ENCODE measurements at regions of chr18 and their contacts with region 1.

Region 1: DNA sequence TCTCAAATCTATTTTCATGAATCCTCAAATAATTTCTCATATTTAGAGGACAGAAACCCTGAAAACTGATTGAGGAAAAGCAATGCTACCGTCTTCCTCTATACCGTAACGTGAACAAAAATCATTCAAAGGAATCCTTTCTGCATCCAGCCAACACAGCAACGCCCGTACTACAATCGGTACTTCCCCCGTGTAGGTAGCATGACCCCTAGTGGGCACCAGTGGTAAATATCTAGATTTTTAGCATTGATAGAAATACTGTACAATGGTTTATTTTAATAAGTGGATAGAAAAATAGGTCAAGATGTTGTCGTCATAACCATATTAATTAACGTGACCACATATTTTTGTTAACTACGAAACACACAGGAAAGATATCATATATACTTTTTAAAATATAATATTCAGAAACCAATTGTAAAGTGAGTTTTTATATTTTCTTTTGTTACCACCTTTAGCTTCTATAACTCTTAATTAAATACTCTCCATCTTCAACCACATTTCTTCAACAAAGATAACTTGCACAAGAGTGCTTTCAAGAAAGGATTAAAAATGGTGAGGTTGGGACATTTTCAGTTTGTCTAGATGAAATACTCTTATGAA is 194.1 kb downstream of the SS18 start:
- DNase-seq: peak; percentile 32
- ATAC-seq: peak; percentile 90
- H3K4me3 ChIP-seq: no peak overlapping the region
- H3K27ac ChIP-seq: no peak overlapping the region
- H3K4me1 ChIP-seq: no peaks in the 10 kb centered on the region
- H3K27me3 ChIP-seq: peaks cover 12% of the 10 kb centered on the region; the same call in 1 of the 2 replicates
- CTCF ChIP-seq: peak; percentile 42 to 85 (median 74); a peak in 5 of 6 replicates
- POLR2A ChIP-seq: no peak
- RAD21 ChIP-seq: peak; percentile 68

Region 2: GRCh38 chr18:24543805-24544498 is 1352.3 kb before region 1 on chr18:
- CTCF ChIA-PET with region 1: no interaction called
- POLR2A ChIA-PET with region 1: no interaction called
- RAD21 ChIA-PET with region 1: no interaction called
- intact Hi-C with region 1: loop called (anchors 1 kb)
- DNase-seq: peak; percentile 22
- ATAC-seq: peak; percentile 73
- H3K4me3 ChIP-seq: no peak overlapping the region
- H3K27ac ChIP-seq: no peak overlapping the region
- H3K4me1 ChIP-seq: no peaks in the 10 kb centered on the region
- H3K27me3 ChIP-seq: no peaks in the 10 kb centered on the region
- CTCF ChIP-seq: peak; percentile 43 to 75 (median 47); a peak in 5 of 6 replicates
- POLR2A ChIP-seq: no peak
- RAD21 ChIP-seq: peak; percentile 66

Region 3: GRCh38 chr18:24600076-24600654 is 1296.1 kb before region 1 on chr18:
- CTCF ChIA-PET with region 1: no interaction called
- POLR2A ChIA-PET with region 1: no interaction called
- RAD21 ChIA-PET with region 1: no interaction called
- intact Hi-C with region 1: loop called (anchors 2 kb)
- DNase-seq: peak; percentile 27
- ATAC-seq: peak; percentile 65
- H3K4me3 ChIP-seq: no peak overlapping the region
- H3K27ac ChIP-seq: no peak overlapping the region
- H3K4me1 ChIP-seq: no peaks in the 10 kb centered on the region
- H3K27me3 ChIP-seq: peaks cover 37% of the 10 kb centered on the region
- CTCF ChIP-seq: peak; percentile 50 to 74 (median 54); a peak in 5 of 6 replicates
- POLR2A ChIP-seq: no peak
- RAD21 ChIP-seq: peak; percentile 65

Region 4: GRCh38 chr18:25561918-25562317 is 334.4 kb before region 1 on chr18:
- CTCF ChIA-PET with region 1: no interaction called
- POLR2A ChIA-PET with region 1: no interaction called
- RAD21 ChIA-PET with region 1: no interaction called
- intact Hi-C with region 1: loop called (anchors 1 kb)
- DNase-seq: no peak
- ATAC-seq: no peak
- H3K4me3 ChIP-seq: no peak overlapping the region
- H3K27ac ChIP-seq: no peak overlapping the region
- H3K4me1 ChIP-seq: no peaks in the 10 kb centered on the region
- H3K27me3 ChIP-seq: no peaks in the 10 kb centered on the region
- CTCF ChIP-seq: peak in 2 of 3 experiments; percentile 24 to 35; a peak in 3 of 6 replicates
- POLR2A ChIP-seq: no peak
- RAD21 ChIP-seq: no peak

Region 5: GRCh38 chr18:25832001-25832604 is 64.2 kb before region 1 on chr18:
- CTCF ChIA-PET with region 1: no interaction called
- POLR2A ChIA-PET with region 1: no interaction called
- RAD21 ChIA-PET with region 1: no interaction called
- intact Hi-C with region 1: loop called (anchors 10 kb)
- DNase-seq: peak; percentile 6
- ATAC-seq: peak; percentile 93
- H3K4me3 ChIP-seq: no peak overlapping the region
- H3K27ac ChIP-seq: no peak overlapping the region
- H3K4me1 ChIP-seq: no peaks in the 10 kb centered on the region
- H3K27me3 ChIP-seq: peaks cover 9% of the 10 kb centered on the region
- CTCF ChIP-seq: peak; percentile 38 to 93 (median 89); a peak in 4 of 6 replicates
- POLR2A ChIP-seq: no peak
- RAD21 ChIP-seq: peak; percentile 63

Region 6: GRCh38 chr18:25875551-25876240 is 20.6 kb before region 1 on chr18:
- CTCF ChIA-PET with region 1: no interaction called
- POLR2A ChIA-PET with region 1: no interaction called
- RAD21 ChIA-PET with region 1: no interaction called
- intact Hi-C with region 1: no loop called
- DNase-seq: no peak
- ATAC-seq: no peak
- H3K4me3 ChIP-seq: no peak overlapping the region
- H3K27ac ChIP-seq: no peak overlapping the region
- H3K4me1 ChIP-seq: no peaks in the 10 kb centered on the region
- H3K27me3 ChIP-seq: peaks cover 18% of the 10 kb centered on the region; the same call in 1 of the 2 replicates
- CTCF ChIP-seq: no peak
- POLR2A ChIP-seq: no peak
- RAD21 ChIP-seq: no peak

Measured in HCT116 (cell line).